ENCODE measurements at regions of chr12 and their contacts with region 1.

Region 1: GRCh38 chr12:57735952-57736740 is 2.4 kb downstream of the AGAP2 start:
- DNase-seq: peak in 1 of 2 experiments; percentile 80
- H3K4me3 ChIP-seq: peak overlapping the region; percentile 19 to 76 (median 30)
- H3K27ac ChIP-seq: no peak overlapping the region
- H3K4me1 ChIP-seq: peaks cover 6 to 29% (median 12%) of the 10 kb centered on the region in 4 experiments; a peak in 6 of 7 replicates
- H3K27me3 ChIP-seq: peaks cover 50 to 97% (median 90%) of the 10 kb centered on the region in 4 experiments
- CTCF ChIP-seq: peak; percentile 60 to 66 (median 64)
- EP300 ChIP-seq: 0 out of 3 replicates have a peak, but pooled peaks of 1 of the 2 experiments have one; percentile 52
- POLR2A ChIP-seq: no peak
- RAD21 ChIP-seq: peak; percentile 73 to 77

Region 2: DNA sequence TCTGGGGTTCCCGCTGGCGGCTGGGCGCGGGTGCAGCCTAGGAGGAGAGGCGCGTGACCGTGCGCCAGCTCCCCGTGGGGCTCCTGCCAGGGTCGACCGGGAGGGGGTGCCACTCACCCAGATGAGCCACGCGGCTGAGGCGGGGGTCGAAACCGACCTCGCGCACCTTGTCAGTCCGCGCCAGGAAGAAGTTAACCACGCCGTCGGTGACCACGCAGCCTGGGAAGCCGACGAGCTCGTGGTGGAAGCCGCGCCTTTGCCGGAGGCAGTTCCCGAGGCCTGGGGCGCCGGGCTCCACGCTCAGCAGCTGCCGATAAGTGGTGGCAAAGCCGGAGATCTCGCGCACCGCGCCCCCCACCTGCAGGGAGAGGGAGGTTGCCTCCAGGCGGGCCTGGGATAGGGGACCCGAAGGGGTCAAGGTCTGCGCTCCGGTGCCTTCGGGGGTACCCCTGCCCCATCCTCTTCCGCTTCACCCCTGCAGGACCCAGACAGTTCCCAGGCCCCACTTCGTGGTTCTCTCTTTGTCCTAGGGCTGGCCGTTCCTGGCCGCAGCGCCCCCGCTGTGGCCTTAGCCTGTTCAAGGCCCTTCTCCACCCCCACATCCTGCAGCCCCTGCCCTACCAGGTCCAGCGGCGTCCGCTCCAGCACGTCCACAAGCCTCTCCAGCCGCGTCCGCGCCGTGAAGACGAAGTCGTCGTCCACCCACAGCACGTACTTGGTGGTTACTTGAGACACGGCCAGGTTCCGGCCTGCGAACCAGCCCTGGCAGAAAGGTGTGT is 108.5 kb before region 1 on chr12:
- CTCF ChIA-PET with region 1: interaction called, 8 read pairs
- POLR2A ChIA-PET with region 1: interaction called, 12 read pairs
- DNase-seq: peak in 1 of 2 experiments; percentile 73
- H3K4me3 ChIP-seq: peak overlapping the region; percentile 2 to 53 (median 32); a peak in 5 of 8 replicates
- H3K27ac ChIP-seq: no peak overlapping the region
- H3K4me1 ChIP-seq: peaks cover 0 to 20% (median 16%) of the 10 kb centered on the region in 4 experiments; a peak in 6 of 7 replicates
- H3K27me3 ChIP-seq: peaks cover 92 to 100% (median 99%) of the 10 kb centered on the region in 4 experiments
- CTCF ChIP-seq: peak in 2 of 3 experiments; percentile 35 to 37; a peak in 3 of 4 replicates
- EP300 ChIP-seq: no peak
- POLR2A ChIP-seq: no peak
- RAD21 ChIP-seq: peak; percentile 36 to 41

Region 3: DNA sequence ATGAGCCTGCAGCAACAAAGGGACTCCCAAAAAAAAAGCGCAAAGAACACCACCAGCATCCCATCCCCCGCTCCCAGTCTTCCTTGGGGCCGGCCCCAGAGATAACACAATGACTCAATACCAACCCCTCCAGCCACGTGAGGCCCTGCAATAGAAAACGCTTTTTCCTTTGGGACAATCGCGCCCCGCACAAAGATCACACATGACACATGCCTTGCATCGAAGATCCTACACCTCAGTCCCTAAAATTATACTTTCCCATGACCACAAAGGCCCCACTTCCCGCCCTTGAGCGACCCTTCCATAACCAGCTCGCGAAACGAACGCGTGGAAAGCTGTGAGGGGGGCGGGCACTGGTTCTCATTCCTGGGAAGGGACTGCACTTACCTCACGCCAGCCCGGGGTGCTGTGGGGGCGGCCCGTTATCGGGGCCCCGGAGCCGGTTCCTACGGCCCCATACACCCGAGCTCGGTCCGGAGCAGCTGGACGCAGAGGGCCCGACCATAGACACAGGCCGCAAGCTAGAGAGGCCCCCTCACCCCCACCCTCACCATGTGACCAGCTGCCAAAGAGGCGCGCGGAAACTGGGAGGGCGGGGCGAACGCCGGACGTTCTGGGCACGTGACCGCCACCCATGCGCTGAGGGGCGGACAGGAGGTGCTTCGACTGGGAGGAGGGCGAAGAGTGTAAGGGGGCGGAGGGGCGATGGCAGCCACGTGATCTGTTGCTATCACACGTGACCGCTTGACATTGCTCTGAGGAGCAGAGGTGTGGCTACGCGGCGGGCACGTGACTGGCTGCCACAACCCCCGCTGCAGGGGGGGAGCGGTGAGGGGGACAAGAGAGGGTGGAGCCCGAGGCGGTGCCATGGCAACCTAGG is 15.9 kb after region 1 on chr12 and contains the start of gene CDK4:
- CTCF ChIA-PET with region 1: interaction called, 8 read pairs
- POLR2A ChIA-PET with region 1: interaction called, 25 read pairs
- DNase-seq: peak; percentile 99 to 100
- H3K4me3 ChIP-seq: peak within 1 kb of the TSS; percentile 96 to 99 (median 98)
- H3K27ac ChIP-seq: peak within 1 kb of the TSS; percentile 86
- H3K4me1 ChIP-seq: peaks cover 3 to 26% (median 7%) of the 10 kb centered on the region in 4 experiments; a peak in 6 of 7 replicates
- H3K27me3 ChIP-seq: peaks cover 8 to 22% (median 20%) of the 10 kb centered on the region in 4 experiments
- CTCF ChIP-seq: no peak
- EP300 ChIP-seq: peak in 1 of 2 experiments; percentile 76; a peak in 1 of 3 replicates
- POLR2A ChIP-seq: peak; percentile 79
- RAD21 ChIP-seq: no peak
- total RNA-seq, gene CDK4: 174 and 180 TPM in 2 replicates

Region 4: GRCh38 chr12:57759360-57759980 is 23.3 kb after region 1 on chr12:
- CTCF ChIA-PET with region 1: interaction called, 18 read pairs
- POLR2A ChIA-PET with region 1: interaction called, 5 read pairs
- DNase-seq: no peak
- H3K4me3 ChIP-seq: no peak overlapping the region
- H3K27ac ChIP-seq: no peak overlapping the region
- H3K4me1 ChIP-seq: peaks cover 0 to 9% (median 6%) of the 10 kb centered on the region in 4 experiments; a peak in 6 of 7 replicates
- H3K27me3 ChIP-seq: peaks cover 12 to 41% (median 33%) of the 10 kb centered on the region in 4 experiments
- CTCF ChIP-seq: peak; percentile 47 to 66 (median 59)
- EP300 ChIP-seq: no peak
- POLR2A ChIP-seq: no peak
- RAD21 ChIP-seq: peak in 1 of 2 experiments; percentile 7; a peak in 1 of 4 replicates

Measured in H1 (cell line).